GM13977 (cell line): ENCODE measurements at regions of chr10 and their contacts with region 1.

Region 1: DNA sequence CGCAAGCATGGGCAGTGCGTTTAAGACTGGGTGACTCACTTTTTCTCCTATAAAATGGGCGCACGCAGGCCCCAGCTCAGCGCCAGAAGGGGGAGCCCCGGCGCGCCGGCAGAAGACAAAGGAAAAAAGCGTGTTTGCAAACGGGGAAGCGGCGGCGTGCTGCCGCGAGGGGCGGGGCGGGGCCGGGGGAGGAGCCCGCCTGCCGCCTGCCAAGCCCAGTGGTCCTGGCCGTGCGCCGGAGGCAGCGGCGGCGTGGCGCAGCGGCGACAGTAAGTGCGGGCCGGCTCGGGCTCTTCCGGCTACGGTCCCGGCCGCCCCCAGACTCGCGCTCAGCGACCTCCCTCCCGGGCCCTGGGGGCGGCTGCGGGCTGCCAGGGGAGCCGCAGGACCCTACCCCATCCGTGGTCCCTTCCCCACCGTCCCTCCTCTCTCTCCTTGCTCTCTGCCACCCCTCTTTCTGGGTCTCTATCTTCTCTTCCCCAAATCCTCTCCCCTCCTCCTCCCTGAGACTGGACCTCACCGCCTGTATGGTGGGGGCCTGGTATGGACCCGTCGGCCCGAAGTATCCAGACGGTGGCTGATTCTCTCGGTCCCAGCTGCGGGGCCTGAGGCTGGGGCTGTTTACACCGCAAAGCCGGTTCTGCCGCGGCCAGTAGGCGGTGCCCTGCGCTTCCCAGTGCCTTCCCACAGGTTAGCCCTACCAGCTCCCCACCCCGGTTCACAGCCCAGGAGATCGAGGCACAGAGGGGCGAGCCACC is at the start of gene SLC29A3:
- DNase-seq: peak; percentile 94
- CTCF ChIP-seq: peak; percentile 80

Region 2: GRCh38 chr10:71033396-71033980 is 285.7 kb before region 1 on chr10:
- in situ Hi-C with region 1: no loop called
- DNase-seq: no peak
- CTCF ChIP-seq: no peak

Region 3: GRCh38 chr10:71217266-71218045 is 101.8 kb before region 1 on chr10:
- in situ Hi-C with region 1: no loop called
- DNase-seq: peak; percentile 53
- CTCF ChIP-seq: peak; percentile 9

Region 4: DNA sequence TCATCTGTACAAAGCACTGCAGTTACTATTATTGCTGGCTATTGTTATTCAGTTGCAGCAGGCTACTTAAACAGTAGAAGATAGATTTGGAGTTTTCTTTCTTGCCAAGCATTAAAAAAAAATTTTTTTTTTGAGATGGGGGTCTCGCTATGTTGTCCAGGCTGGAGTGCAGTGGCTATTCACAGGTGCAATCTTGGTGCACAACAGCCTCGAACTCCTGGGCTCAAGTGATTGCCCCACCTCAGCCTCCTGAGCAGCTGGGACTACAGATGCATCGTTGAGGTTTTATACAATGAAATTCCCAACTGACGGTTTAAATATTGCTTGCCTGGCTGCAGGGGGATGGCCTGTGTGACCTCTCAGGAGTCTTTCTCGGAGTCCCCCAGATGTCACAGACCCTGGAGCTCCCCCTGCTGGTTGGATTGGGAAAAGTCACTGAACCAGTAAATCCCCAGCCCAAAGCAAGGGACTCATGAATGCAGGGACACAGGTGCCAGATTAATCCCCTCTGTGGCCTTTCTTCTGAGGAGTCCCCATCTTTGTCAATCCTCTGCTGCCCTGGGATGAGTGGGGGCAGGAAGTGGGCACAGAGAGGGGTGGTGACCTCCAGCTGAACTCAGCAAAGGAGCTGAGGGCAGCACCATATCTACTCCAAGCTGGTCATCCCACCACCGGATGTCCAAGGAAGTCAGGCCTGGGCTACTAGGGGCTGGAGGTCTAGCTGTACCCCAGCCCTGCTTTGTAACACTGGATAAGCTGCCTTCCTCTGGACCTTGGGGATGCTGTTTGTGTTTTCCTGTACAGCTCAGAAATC is 250.8 kb after region 1 on chr10:
- in situ Hi-C with region 1: loop called (anchors 10 kb)
- DNase-seq: peak; percentile 83
- CTCF ChIP-seq: peak; percentile 74

Region 5: GRCh38 chr10:71713135-71714030 is 394.2 kb after region 1 on chr10:
- in situ Hi-C with region 1: loop called (anchors 10 kb)
- DNase-seq: no peak
- CTCF ChIP-seq: no peak

Region 6: GRCh38 chr10:72932259-72933015 is 1613.2 kb after region 1 on chr10:
- in situ Hi-C with region 1: no loop called
- DNase-seq: no peak
- CTCF ChIP-seq: no peak